Esophagus muscularis mucosa (tissue), 4 donors: ENCODE measurements at regions of chr6 and their contacts with region 1.

Region 1: DNA sequence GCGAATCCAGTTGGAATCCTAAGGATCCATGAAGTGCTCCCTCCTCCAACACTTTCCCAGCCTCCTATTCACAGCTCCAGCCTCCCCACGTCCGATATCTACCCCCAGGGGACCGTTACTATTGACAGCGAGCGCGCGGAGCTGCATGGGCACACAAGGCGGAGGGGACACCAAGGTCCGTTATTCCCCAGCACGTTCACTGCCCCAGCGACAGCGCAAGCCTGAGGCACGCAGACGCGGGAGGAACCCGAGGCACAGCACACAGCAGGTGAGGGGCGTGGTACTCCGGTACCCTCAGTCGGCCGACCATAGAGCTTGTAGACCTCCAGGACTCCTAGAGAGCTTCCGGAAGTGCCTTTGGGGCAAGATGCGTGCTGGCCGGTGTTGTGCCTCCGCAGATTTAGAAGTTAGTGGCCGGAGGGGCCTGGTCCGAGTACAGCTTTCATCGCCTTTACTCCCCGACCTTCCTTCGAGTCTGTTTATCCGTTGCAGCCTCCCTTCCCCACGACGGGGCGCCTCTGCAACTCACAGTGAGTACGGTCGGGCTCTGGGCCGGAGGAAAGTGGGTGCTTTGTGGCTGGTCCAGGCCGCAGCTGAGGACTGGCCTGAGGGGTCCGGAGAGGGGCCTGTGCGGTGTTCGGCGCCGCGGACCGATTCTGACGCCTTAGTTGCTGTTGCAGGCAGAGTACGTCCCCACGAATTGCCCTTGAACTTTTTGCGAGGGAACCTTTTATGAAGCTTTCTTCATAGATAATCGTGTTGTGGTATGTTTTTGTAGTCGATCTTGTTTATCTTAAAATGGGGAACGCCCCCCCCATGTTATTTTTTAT is at the start of gene ZKSCAN8:
- DNase-seq: no peak
- H3K4me3 ChIP-seq: peak within 1 kb of the TSS; percentile 74 to 90 (median 82)
- H3K27ac ChIP-seq: peak within 1 kb of the TSS; percentile 76 to 83 (median 79)
- H3K4me1 ChIP-seq: peaks cover 36 to 50% (median 48%) of the 10 kb centered on the region in 4 donors
- H3K27me3 ChIP-seq: no peaks in the 10 kb centered on the region
- CTCF ChIP-seq: no peak
- EP300 ChIP-seq: no peak
- POLR2A ChIP-seq: no peak
- total RNA-seq, gene ZKSCAN8: 18.7 to 21.7 (median 20.8) TPM

Region 2: GRCh38 chr6:28225056-28225834 is 83.5 kb after region 1 on chr6 and contains the start of gene ZSCAN9:
- intact Hi-C with region 1: loop called (anchors 5 kb)
- DNase-seq: peak; percentile 95
- H3K4me3 ChIP-seq: peak within 1 kb of the TSS; percentile 69 to 89 (median 79)
- H3K27ac ChIP-seq: peak within 1 kb of the TSS; percentile 81 to 88 (median 84)
- H3K4me1 ChIP-seq: peaks cover 10 to 27% (median 17%) of the 10 kb centered on the region in 4 donors
- H3K27me3 ChIP-seq: peaks cover 0 to 19% (median 0%) of the 10 kb centered on the region in 4 donors
- CTCF ChIP-seq: no peak
- EP300 ChIP-seq: no peak
- POLR2A ChIP-seq: no peak
- total RNA-seq, gene ZSCAN9: 11.4 to 15.4 (median 12.0) TPM